Vagina (tissue), 2 donors: ENCODE measurements at regions of chr5 and their contacts with region 1.

Region 1: GRCh38 chr5:42994246-42995151 is 45.6 kb downstream of the ANXA2R start:
- DNase-seq: no peak
- H3K4me3 ChIP-seq: peak overlapping the region; percentile 46 to 59
- H3K27ac ChIP-seq: peak overlapping the region; percentile 89
- H3K4me1 ChIP-seq: peaks cover 6% of the 10 kb centered on the region
- H3K27me3 ChIP-seq: no peaks in the 10 kb centered on the region
- CTCF ChIP-seq: peak; percentile 23 to 92 (median 76)
- POLR2A ChIP-seq: no peak

Region 2: GRCh38 chr5:42745426-42745825 is 249.1 kb before region 1 on chr5:
- intact Hi-C with region 1: no loop called
- DNase-seq: no peak
- H3K4me3 ChIP-seq: no peak overlapping the region
- H3K27ac ChIP-seq: no peak overlapping the region
- H3K4me1 ChIP-seq: no peaks in the 10 kb centered on the region
- H3K27me3 ChIP-seq: no peaks in the 10 kb centered on the region
- CTCF ChIP-seq: no peak
- POLR2A ChIP-seq: no peak

Region 3: DNA sequence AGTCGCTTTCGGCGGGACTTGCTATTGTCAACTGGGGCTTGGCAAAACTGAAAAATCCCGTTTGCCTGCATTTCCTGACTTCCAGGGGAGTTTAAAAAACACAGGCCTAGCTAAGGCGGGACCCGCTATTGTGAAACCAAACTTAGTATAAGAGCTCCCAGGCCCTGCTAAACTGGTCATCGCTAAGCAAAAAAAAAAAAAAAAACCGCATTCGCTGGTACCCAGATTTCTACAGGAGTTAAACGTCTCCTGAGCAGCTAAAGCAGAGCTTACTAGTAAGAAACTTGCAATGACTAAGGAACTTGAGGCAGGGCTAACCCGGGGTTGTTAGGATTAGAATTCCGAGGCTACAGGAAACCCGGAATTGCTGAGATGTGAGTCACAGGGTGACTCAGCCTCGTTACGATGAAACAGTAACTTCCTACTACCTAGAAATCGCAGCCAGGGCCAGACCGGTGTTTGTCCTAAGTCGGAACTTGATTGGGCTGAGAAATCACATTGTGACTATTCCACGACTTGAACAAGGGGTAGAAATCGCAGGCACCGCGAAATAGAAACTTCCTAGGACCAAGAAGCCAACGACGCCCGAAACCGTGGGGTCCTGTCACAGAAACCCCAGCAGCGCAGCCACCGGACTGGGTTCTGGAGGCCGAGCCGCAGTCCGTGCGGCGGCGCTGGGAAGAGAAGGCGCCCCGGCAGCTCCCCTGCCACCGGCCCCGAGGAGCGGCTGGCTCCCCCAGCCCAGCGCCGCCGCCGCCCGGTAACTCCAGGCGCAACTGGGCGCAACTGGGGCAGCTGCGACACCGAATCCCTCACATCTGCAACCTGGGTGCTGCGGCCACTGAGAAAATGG is 43.8 kb before region 1 on chr5:
- intact Hi-C with region 1: loop called (anchors 2 kb)
- DNase-seq: peak in 1 of 2 donors; percentile 94
- H3K4me3 ChIP-seq: peak overlapping the region; percentile 45 to 63
- H3K27ac ChIP-seq: peak overlapping the region; percentile 93
- H3K4me1 ChIP-seq: peaks cover 12% of the 10 kb centered on the region
- H3K27me3 ChIP-seq: no peaks in the 10 kb centered on the region
- CTCF ChIP-seq: no peak
- POLR2A ChIP-seq: no peak

Region 4: GRCh38 chr5:43008369-43009153 is 14.1 kb after region 1 on chr5:
- intact Hi-C with region 1: loop called (anchors 2 kb)
- DNase-seq: no peak
- H3K4me3 ChIP-seq: peak overlapping the region; percentile 55 to 57
- H3K27ac ChIP-seq: peak overlapping the region; percentile 91
- H3K4me1 ChIP-seq: peaks cover 16% of the 10 kb centered on the region
- H3K27me3 ChIP-seq: no peaks in the 10 kb centered on the region
- CTCF ChIP-seq: no peak
- POLR2A ChIP-seq: peak in 1 of 2 donors; percentile 70

Region 5: GRCh38 chr5:43268188-43268820 is 273.8 kb after region 1 on chr5:
- intact Hi-C with region 1: no loop called
- DNase-seq: no peak
- H3K4me3 ChIP-seq: no peak overlapping the region
- H3K27ac ChIP-seq: no peak overlapping the region
- H3K4me1 ChIP-seq: peaks cover 2% of the 10 kb centered on the region
- H3K27me3 ChIP-seq: no peaks in the 10 kb centered on the region
- CTCF ChIP-seq: no peak
- POLR2A ChIP-seq: no peak